ENCODE measurements at regions of chr6 and their contacts with region 1.

Region 1: DNA sequence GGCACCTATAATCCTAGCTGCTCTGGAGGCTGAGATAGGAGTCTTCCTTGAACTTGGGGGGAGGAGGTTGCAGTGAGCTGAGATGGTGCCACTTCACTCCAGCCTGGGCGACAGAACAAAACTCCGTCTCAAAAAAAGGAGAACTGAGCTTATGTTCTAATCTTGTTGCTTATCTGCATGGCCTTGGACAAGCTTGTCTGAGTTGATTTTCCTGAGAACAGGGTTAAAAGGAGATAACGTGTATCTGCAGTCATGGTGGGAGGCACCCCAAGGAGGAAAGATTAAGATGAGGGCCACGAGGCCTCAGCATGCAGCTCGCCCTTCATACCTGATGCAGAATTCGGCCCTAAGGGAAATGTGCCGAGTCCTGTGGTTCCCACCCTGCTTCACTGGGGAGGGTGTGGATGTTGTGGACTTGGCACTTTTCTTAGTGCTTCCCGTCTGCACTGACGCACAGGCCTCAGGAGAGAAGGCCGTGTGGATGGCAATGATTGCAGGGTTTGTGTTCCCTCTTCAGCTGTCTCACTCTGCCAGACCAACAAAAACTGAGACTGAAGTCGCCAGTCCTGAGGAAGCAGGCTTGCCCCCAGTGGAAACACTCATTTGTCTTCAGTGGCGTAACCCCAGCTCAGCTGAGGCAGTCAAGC is 56.3 kb downstream of the EZR start:
- DNase-seq: no peak
- ATAC-seq: no peak
- H3K4me3 Mint-ChIP-seq: no peak overlapping the region
- H3K27ac Mint-ChIP-seq: peak overlapping the region; percentile 38
- H3K4me1 Mint-ChIP-seq: peaks cover 3% of the 10 kb centered on the region
- H3K27me3 Mint-ChIP-seq: no peaks in the 10 kb centered on the region
- CTCF ChIP-seq: no peak

Region 2: DNA sequence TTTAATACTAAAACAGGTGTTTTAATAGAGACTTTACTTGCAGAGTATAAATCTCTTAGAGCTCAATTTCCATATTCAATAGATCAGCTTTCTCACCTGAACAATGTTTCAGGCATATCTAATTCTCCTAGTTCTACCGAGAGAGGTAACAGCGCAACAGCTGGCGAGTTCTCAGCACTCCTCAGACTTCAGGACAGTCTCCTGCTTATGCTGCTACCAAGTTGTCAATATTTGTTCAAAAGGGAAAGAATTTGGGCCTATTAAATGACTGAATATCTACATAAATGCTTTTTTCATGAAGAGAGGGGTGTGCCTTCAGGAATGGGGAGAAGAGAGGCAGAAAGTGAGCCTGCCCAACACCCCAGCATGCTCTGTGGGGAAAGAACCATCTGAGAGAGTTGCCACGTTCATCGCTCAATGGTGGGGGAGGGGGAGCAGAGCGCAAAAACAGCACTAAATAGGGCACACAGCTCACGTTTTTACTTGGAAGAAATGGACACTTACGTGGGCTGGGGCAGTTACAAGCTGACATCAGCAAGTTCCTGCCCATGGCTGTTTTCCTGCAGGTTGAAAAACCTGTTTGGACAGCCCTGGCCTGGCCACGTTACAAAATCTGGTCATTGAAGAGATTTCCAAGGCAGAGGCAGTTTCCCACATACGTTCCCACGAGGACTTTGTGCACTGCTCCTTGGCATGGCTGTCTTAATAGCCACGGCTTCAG is 18.2 kb after region 1 on chr6:
- CTCF ChIA-PET with region 1: no interaction called
- POLR2A ChIA-PET with region 1: interaction called, 14 read pairs
- intact Hi-C with region 1: no loop called
- DNase-seq: no peak
- ATAC-seq: no peak
- H3K4me3 Mint-ChIP-seq: no peak overlapping the region
- H3K27ac Mint-ChIP-seq: peak overlapping the region; percentile 20
- H3K4me1 Mint-ChIP-seq: peaks cover 32% of the 10 kb centered on the region
- H3K27me3 Mint-ChIP-seq: no peaks in the 10 kb centered on the region
- CTCF ChIP-seq: no peak